Ascending aorta (tissue), 2 donors: ENCODE measurements at regions of chr3 and their contacts with region 1.

Region 1: GRCh38 chr3:160754855-160755747 is 930 bp upstream of the PPM1L start:
- DNase-seq: peak; percentile 85 to 96
- H3K4me3 ChIP-seq: peak overlapping the region; percentile 86 to 97
- H3K27ac ChIP-seq: peak overlapping the region; percentile 92 to 93
- H3K4me1 ChIP-seq: peaks cover 4 to 11% of the 10 kb centered on the region in 2 donors
- H3K27me3 ChIP-seq: no peaks in the 10 kb centered on the region
- CTCF ChIP-seq: no peak

Region 2: DNA sequence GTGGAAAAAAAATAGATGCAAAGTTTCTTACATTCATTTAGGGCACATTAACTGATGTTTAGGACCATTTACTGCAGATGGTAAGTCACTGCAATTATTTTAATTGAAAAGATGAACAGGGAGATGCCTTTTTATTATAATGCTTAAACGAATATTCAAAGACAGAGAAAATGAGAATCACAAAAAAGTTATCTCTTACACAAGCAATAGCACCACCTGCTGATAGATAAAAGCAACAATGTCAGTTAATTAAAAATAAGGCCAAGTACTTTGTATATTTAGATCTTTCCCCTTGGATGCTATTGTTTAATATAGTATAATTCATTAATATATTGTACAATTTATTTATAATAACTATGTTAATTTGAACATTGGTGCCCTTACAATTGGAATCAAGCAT is 412.0 kb before region 1 on chr3:
- intact Hi-C with region 1: no loop called
- DNase-seq: no peak
- H3K4me3 ChIP-seq: no peak overlapping the region
- H3K27ac ChIP-seq: no peak overlapping the region
- H3K4me1 ChIP-seq: no peaks in the 10 kb centered on the region
- H3K27me3 ChIP-seq: no peaks in the 10 kb centered on the region
- CTCF ChIP-seq: peak in 2 of 3 experiments; percentile 5 to 36

Region 3: DNA sequence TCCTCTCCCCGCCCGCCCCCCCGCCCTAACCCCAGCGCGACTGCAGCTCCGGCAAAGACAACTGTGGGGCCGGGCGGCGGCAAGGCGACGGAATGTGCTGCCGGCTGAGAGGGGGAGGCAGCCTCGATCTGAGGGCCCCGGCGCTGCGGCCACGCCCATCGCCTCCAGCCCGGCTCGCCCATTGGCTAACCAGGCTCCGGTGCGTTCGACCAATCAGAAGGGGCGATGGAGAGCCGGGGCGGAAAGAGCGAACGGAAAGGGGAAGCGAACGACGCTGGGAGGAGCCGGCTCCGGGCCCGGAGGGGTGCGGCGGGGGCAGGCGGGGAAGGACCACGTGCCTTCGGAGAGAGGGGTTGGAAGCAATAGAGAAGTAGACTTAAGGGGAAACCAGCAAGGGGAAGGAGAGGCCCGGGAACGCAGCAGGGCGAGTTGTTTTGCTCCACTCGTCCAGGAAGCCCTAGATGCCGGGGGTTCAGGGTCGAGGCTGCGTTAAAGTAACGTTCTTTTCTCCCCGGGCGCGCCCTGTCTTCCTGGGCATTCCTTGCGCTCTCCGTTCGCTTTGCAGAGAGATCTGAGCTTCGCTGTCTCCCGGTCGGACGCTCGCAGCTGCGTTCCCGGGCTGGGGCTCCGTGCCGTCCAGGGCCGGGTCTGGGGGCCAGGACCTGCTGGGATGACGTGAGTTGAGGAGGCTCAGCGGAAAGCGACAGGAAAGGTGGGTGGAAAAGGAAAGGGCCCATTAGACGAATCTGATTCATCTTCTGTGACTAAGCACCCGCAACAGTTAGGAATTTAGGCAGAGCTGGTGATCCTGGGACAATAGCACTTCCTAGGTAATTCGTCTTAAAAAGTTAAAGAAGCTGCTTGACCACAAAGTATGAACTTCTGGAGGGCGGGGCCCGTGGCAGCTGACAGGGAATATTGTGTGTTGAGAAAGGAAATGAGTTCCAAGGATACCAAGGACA is 189.4 kb before region 1 on chr3 and contains the start of gene KPNA4:
- intact Hi-C with region 1: loop called (anchors 1 kb)
- DNase-seq: peak; percentile 93 to 98
- H3K4me3 ChIP-seq: peak within 1 kb of the TSS; percentile 82 to 96
- H3K27ac ChIP-seq: peak within 1 kb of the TSS; percentile 98 to 99
- H3K4me1 ChIP-seq: peaks cover 4 to 21% of the 10 kb centered on the region in 2 donors
- H3K27me3 ChIP-seq: no peaks in the 10 kb centered on the region
- CTCF ChIP-seq: no peak
- total RNA-seq, gene KPNA4: 17.6 TPM

Region 4: DNA sequence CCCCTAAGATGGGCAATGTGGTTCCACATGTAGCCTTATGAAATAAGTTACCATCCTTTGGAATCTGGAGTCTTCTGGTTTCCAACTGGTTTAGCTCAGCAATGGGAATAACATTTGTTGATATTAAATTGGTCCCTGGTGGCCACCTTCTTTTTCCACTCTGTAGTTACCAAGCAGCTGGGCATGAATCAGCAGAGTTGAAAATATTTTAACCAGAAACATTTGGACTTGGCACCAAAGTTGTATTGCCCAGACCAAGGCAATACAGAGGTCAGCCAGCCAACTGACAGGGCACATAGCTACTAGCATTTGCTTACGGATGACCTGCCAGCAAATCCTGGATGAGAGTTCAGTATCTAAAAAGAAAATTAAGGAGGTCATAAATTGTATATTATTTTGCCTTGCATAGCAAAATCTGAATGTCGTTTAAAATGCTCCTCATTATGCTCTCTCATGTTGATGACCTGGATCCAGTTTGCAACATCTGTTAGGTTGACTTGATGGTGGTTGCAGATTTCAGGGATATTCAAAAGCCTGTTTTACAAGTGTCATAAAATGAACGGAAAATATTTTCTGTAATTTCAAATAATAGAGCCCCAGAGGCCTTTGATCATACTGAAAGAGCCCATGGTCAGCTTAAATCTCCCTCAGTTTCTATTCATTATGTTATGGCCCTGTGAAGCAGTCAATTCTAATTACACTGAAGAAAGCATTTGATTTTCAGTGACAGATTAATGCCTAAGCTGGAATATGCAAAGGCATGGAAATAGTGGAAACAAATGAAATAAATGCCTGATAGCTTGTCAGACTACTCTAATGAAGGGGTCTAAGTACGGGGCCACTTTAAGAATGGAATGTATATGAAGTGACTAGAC is 55.5 kb after region 1 on chr3:
- intact Hi-C with region 1: loop called (anchors 2 kb)
- DNase-seq: peak in 1 of 2 donors; percentile 76
- H3K4me3 ChIP-seq: no peak overlapping the region
- H3K27ac ChIP-seq: peak overlapping the region; percentile 42 to 68
- H3K4me1 ChIP-seq: peaks cover 10 to 30% of the 10 kb centered on the region in 2 donors
- H3K27me3 ChIP-seq: no peaks in the 10 kb centered on the region
- CTCF ChIP-seq: no peak

Region 5: GRCh38 chr3:160941885-160942494 is 186.9 kb after region 1 on chr3:
- intact Hi-C with region 1: loop called (anchors 2 kb)
- DNase-seq: peak in 1 of 2 donors; percentile 87
- H3K4me3 ChIP-seq: no peak overlapping the region
- H3K27ac ChIP-seq: no peak overlapping the region
- H3K4me1 ChIP-seq: no peaks in the 10 kb centered on the region
- H3K27me3 ChIP-seq: no peaks in the 10 kb centered on the region
- CTCF ChIP-seq: peak; percentile 71 to 89 (median 86)

Region 6: GRCh38 chr3:161220850-161221753 is 466.0 kb after region 1 on chr3 and contains the start of gene NMD3:
- intact Hi-C with region 1: loop called (anchors 5 kb)
- DNase-seq: peak; percentile 75 to 96
- H3K4me3 ChIP-seq: peak within 1 kb of the TSS; percentile 87 to 92
- H3K27ac ChIP-seq: peak within 1 kb of the TSS; percentile 93 to 95
- H3K4me1 ChIP-seq: peaks cover 0 to 9% of the 10 kb centered on the region in 2 donors
- H3K27me3 ChIP-seq: no peaks in the 10 kb centered on the region
- CTCF ChIP-seq: no peak
- total RNA-seq, gene NMD3: 34.1 TPM